Dorsolateral prefrontal cortex (tissue), 120 donors: ENCODE measurements at regions of chr17 and their contacts with region 1.

Region 1: DNA sequence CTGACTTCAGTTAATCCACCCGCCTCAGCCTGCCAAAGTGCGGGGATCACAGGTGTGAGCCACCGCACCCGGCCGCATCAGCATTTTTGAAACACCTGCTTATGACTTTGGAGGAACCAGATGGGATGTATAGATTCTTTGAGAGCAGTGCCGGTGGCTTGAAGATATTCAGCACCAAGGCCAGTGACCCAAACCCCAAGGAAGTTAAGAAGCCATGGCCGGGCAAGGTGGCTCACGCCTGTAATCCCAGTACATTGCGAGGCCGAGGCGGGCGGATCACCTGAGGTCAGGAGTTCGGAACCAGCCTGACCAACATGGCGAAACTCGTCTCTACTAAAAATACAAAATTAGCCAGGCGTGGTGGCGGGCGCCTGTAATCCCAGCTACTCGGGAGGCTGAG is 43.9 kb downstream of the TRARG1 start:
- DNase-seq: peak in 2 of 10 donors; percentile 8 to 34
- H3K4me3 ChIP-seq: no peak overlapping the region
- H3K27ac ChIP-seq: no peak overlapping the region
- H3K27me3 ChIP-seq: no peaks in the 10 kb centered on the region
- CTCF ChIP-seq: no peak

Region 2: DNA sequence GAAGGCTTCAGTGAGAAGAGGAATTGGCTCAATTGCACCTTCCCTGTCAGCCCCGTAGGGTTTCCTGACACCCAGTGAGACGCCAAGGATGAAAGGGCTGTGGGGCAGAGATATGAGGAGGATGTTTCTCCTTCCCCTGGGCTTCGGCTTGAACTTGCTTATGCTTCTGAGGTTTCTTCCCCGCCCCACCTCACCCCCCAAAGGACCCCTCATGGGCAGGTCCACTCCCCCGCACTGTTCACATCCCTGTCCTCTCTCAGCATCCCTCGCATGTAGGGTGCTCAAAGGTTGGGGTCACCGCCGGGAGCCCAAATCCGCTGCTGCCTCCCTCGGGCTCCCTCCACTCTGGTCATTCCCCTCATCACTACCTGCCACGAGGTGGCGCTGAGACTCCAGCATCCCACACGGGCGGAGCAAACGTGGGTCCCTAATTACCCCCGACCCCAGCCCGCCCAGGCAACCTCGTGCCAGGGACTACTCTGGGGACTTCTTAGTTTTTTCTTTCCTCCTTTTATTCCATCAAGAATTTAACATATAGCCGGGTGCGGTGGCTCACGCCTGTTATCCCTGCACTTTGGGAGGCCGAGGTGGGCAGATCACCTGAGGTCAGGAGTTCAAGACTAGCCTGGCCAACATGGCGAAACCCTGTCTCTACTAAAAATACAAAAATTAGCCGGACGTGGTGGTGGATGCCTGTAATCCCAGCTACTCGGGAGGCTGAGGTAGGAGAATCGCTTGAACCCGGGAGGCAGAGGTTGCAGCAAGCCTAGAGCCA is 47.2 kb before region 1 on chr17:
- intact Hi-C with region 1: loop called (anchors 5 to 10 kb)
- DNase-seq: peak in 7 of 10 donors; percentile 24 to 64 (median 45)
- H3K4me3 ChIP-seq: peak overlapping the region in 2 of 59 donors; percentile 6 to 16
- H3K27ac ChIP-seq: no peak overlapping the region
- H3K27me3 ChIP-seq: peaks cover 0 to 32% (median 6%) of the 10 kb centered on the region in 45 donors
- CTCF ChIP-seq: peak; percentile 39 to 89 (median 74)